Panc1 (cell line): ENCODE measurements at regions of chr7 and their contacts with region 1.

Region 1: GRCh38 chr7:94449148-94449725 is 54.5 kb downstream of the COL1A2 start:
- DNase-seq: no peak
- ATAC-seq: no peak
- H3K4me3 ChIP-seq: no peak overlapping the region
- H3K27ac ChIP-seq: no peak overlapping the region
- H3K4me1 ChIP-seq: no peaks in the 10 kb centered on the region
- H3K27me3 ChIP-seq: no peaks in the 10 kb centered on the region
- CTCF ChIP-seq: peak; percentile 69; the same call in 1 of the 2 replicates

Region 2: GRCh38 chr7:94314413-94315410 is 134.5 kb before region 1 on chr7:
- CTCF ChIA-PET with region 1: no interaction called
- POLR2A ChIA-PET with region 1: no interaction called
- in situ Hi-C with region 1: no loop called
- intact Hi-C with region 1: no loop called
- DNase-seq: no peak
- ATAC-seq: no peak
- H3K4me3 ChIP-seq: no peak overlapping the region
- H3K27ac ChIP-seq: no peak overlapping the region
- H3K4me1 ChIP-seq: no peaks in the 10 kb centered on the region
- H3K27me3 ChIP-seq: no peaks in the 10 kb centered on the region
- CTCF ChIP-seq: no peak

Region 3: GRCh38 chr7:94382132-94382531 is 67.1 kb before region 1 on chr7:
- CTCF ChIA-PET with region 1: no interaction called
- POLR2A ChIA-PET with region 1: no interaction called
- in situ Hi-C with region 1: no loop called
- intact Hi-C with region 1: no loop called
- DNase-seq: no peak
- ATAC-seq: no peak
- H3K4me3 ChIP-seq: no peak overlapping the region
- H3K27ac ChIP-seq: no peak overlapping the region
- H3K4me1 ChIP-seq: no peaks in the 10 kb centered on the region
- H3K27me3 ChIP-seq: no peaks in the 10 kb centered on the region
- CTCF ChIP-seq: no peak

Region 4: DNA sequence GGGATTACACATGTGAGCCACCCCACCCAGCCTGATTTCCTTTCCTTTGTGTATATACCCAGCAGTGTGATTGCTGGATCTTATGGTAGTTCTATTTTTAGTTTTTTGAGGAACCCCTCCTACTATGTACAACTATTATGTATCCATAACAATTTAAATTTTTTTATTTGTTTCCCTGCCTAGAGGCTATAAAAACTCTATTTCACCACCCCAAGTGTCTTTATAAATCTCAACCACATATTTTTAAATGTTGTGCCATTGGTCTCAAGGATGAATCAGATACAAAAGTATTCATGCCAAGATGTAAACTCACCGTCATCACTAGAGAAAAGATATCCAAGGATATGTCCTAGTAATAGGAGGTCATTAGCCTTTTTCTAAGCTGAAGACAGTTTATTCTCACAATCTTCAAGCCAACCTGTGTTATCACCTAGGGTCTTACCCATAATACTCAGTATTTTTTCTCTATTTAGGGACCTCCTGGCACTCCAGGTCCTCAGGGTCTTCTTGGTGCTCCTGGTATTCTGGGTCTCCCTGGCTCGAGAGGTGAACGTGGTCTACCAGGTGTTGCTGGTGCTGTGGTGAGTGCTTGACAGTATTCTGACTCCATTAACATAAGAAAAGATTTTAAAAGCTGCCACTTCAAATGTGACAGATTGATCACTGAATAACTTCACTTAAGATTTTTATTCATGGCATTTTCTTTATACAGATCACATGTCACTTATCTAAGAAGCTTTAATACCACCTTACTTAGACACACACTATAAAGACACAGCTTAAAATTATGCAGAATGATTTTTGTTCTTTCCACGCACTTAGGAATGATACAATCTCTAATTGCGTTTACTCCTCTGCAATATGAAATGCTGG is 25.1 kb before region 1 on chr7:
- CTCF ChIA-PET with region 1: no interaction called
- POLR2A ChIA-PET with region 1: no interaction called
- in situ Hi-C with region 1: no loop called
- intact Hi-C with region 1: no loop called
- DNase-seq: no peak
- ATAC-seq: no peak
- H3K4me3 ChIP-seq: no peak overlapping the region
- H3K27ac ChIP-seq: no peak overlapping the region
- H3K4me1 ChIP-seq: no peaks in the 10 kb centered on the region
- H3K27me3 ChIP-seq: no peaks in the 10 kb centered on the region
- CTCF ChIP-seq: no peak

Region 5: DNA sequence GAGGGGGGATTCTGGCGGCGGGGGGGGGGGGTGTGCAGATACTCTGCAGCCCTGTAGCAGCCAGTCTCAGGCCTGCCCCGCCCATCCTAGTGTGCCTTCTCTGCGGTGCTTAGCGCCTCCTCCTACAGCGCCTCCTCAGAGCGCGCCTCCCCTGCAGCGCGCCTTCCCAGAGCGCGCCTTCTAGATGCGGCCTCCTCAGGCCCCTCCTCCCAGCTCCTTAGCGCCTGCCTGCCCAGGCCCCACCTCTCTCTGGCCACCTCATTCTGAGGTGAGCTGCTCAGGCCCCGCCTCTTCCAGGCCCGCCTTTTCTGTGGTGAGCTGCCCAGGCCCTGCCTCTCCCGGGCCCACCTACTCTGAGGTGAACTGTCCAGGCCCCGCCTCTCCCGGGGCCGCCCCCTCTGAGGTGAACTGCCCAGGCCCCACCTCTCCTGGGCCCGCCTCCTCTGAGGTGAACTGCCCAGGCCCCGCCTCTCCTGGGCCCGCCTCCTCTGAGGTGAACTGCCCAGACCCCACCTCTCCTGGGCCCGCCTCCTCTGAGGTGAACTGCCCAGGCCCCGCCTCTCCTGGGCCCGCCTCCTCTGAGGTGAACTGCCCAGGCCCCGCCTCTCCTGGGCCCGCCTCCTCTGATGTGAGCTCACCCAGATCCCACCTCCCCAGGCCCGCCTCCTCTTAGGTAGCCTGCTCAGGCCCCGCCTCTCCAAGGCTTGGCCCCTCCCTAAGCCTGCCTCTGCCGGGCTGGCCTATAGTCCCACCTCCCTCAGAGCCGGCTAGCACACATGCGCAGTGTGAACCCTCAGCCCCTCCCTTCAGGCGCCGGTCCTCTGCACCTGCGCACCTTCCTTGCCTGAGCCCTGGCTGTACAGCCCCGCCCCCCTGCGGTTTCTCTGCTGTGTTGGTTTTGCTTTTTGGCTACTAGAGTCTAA is 208.8 kb after region 1 on chr7:
- CTCF ChIA-PET with region 1: interaction called, 3 read pairs
- POLR2A ChIA-PET with region 1: no interaction called
- in situ Hi-C with region 1: no loop called
- intact Hi-C with region 1: loop called (anchors 5 kb)
- DNase-seq: peak; percentile 93
- ATAC-seq: peak; percentile 93
- H3K4me3 ChIP-seq: peak overlapping the region; percentile 66 to 88
- H3K27ac ChIP-seq: no peak overlapping the region; the same call in 1 of the 2 replicates
- H3K4me1 ChIP-seq: peaks cover 5% of the 10 kb centered on the region; the same call in 1 of the 2 replicates
- H3K27me3 ChIP-seq: no peaks in the 10 kb centered on the region
- CTCF ChIP-seq: no peak

Region 6: GRCh38 chr7:94748371-94748770 is 299.1 kb after region 1 on chr7:
- CTCF ChIA-PET with region 1: no interaction called
- POLR2A ChIA-PET with region 1: no interaction called
- in situ Hi-C with region 1: no loop called
- intact Hi-C with region 1: no loop called
- DNase-seq: no peak
- ATAC-seq: no peak
- H3K4me3 ChIP-seq: no peak overlapping the region
- H3K27ac ChIP-seq: no peak overlapping the region
- H3K4me1 ChIP-seq: no peaks in the 10 kb centered on the region
- H3K27me3 ChIP-seq: no peaks in the 10 kb centered on the region
- CTCF ChIP-seq: no peak

Region 7: GRCh38 chr7:95199779-95200558 is 750.7 kb after region 1 on chr7:
- CTCF ChIA-PET with region 1: interaction called, 10 read pairs
- POLR2A ChIA-PET with region 1: no interaction called
- in situ Hi-C with region 1: no loop called
- intact Hi-C with region 1: loop called (anchors 5 kb)
- DNase-seq: peak; percentile 52
- ATAC-seq: no peak
- H3K4me3 ChIP-seq: no peak overlapping the region
- H3K27ac ChIP-seq: no peak overlapping the region
- H3K4me1 ChIP-seq: no peaks in the 10 kb centered on the region
- H3K27me3 ChIP-seq: no peaks in the 10 kb centered on the region
- CTCF ChIP-seq: peak; percentile 78

Region 8: GRCh38 chr7:95396136-95397032 is 947.1 kb after region 1 on chr7 and contains the start of gene PON3:
- CTCF ChIA-PET with region 1: no interaction called
- POLR2A ChIA-PET with region 1: no interaction called
- in situ Hi-C with region 1: no loop called
- intact Hi-C with region 1: loop called (anchors 5 kb)
- DNase-seq: peak; percentile 61
- ATAC-seq: peak; percentile 89
- H3K4me3 ChIP-seq: peak within 1 kb of the TSS; percentile 45 to 58
- H3K27ac ChIP-seq: no peak within 1 kb of the TSS
- H3K4me1 ChIP-seq: no peaks in the 10 kb centered on the region
- H3K27me3 ChIP-seq: no peaks in the 10 kb centered on the region
- CTCF ChIP-seq: peak; percentile 83
- total RNA-seq, gene PON3: 1.2 TPM

Region 9: GRCh38 chr7:95476904-95477594 is 1027.8 kb after region 1 on chr7:
- CTCF ChIA-PET with region 1: interaction called, 9 read pairs
- POLR2A ChIA-PET with region 1: no interaction called
- in situ Hi-C with region 1: no loop called
- intact Hi-C with region 1: loop called (anchors 5 kb)
- DNase-seq: no peak
- ATAC-seq: peak; percentile 71; the same call in 1 of the 2 replicates
- H3K4me3 ChIP-seq: no peak overlapping the region
- H3K27ac ChIP-seq: no peak overlapping the region
- H3K4me1 ChIP-seq: no peaks in the 10 kb centered on the region
- H3K27me3 ChIP-seq: no peaks in the 10 kb centered on the region
- CTCF ChIP-seq: peak; percentile 76